Posterior cingulate gyrus (tissue), 11 donors: ENCODE measurements at regions of chr1 and their contacts with region 1.

Region 1: GRCh38 chr1:46036894-46037839 is 95.3 kb downstream of the PIK3R3 start:
- DNase-seq: peak; percentile 74 to 98 (median 90)

Region 2: DNA sequence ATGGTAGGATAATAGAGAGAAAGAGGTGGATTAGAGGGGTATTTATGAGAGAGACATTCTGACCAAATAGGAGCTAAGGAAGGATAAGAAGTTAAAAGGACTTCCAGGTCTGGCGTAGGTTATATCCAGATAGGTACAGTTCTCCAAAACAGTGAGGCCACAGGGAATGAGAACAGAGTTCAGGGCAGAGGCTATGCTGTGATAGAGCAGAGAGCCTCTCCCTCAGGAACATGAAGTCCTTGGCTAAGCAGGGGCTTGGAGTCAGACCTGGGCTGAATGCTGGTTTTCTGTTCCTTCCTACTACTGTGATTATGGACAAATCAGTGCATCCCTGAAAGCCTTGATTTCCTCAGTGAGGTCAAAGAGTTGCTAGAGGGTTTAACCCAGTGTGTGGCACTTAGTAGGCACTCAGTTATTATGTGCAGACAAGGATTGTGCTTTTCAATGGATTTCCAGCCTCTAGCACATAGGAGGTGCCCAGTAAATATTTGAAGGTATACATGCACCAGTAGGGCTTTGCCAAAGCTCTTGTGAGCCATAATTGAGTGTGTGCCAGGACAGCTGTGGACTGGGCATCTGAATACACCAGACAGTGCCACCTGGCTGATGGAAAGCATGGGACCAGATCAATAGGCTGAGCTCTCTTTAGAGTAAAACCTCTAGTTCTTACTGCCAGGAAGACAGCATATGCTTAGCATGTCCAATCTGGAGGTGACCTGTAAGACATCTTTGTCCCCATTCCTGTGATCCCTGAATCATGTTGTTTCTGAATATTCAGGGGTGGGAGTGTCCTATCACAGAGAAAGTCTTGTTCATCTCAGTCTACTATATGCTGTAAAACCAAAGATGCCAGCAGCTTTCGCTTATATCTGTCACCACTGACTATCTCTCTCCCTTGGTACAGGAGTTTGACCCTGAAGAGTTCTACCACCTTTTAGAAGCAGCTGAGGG is 15.8 kb before region 1 on chr1:
- intact Hi-C with region 1: no loop called
- DNase-seq: no peak

Region 3: GRCh38 chr1:46179138-46180081 is 142.2 kb after region 1 on chr1:
- intact Hi-C with region 1: loop called (anchors 1 kb)
- DNase-seq: peak in 9 of 10 donors; percentile 43 to 96 (median 84)